B cell (primary cell): ENCODE measurements at regions of chr19 and their contacts with region 1.

Region 1: GRCh38 chr19:1020868-1021425 is at the start of gene TMEM259:
- DNase-seq: peak; percentile 99
- ATAC-seq: peak; percentile 87
- H3K4me3 ChIP-seq: peak within 1 kb of the TSS; percentile 62 to 94 (median 87)
- H3K4me3 Mint-ChIP-seq: peak within 1 kb of the TSS; percentile 89
- H3K27ac ChIP-seq: peak within 1 kb of the TSS; percentile 98 to 99
- H3K27ac Mint-ChIP-seq: peak within 1 kb of the TSS; percentile 100
- H3K4me1 ChIP-seq: peaks cover 42 to 60% of the 10 kb centered on the region in 2 donors
- H3K4me1 Mint-ChIP-seq: peaks cover 45% of the 10 kb centered on the region
- H3K27me3 ChIP-seq: no peaks in the 10 kb centered on the region
- H3K27me3 Mint-ChIP-seq: no peaks in the 10 kb centered on the region
- CTCF ChIP-seq: no peak
- total RNA-seq, gene TMEM259: 373 and 377 TPM in 2 replicates

Region 2: DNA sequence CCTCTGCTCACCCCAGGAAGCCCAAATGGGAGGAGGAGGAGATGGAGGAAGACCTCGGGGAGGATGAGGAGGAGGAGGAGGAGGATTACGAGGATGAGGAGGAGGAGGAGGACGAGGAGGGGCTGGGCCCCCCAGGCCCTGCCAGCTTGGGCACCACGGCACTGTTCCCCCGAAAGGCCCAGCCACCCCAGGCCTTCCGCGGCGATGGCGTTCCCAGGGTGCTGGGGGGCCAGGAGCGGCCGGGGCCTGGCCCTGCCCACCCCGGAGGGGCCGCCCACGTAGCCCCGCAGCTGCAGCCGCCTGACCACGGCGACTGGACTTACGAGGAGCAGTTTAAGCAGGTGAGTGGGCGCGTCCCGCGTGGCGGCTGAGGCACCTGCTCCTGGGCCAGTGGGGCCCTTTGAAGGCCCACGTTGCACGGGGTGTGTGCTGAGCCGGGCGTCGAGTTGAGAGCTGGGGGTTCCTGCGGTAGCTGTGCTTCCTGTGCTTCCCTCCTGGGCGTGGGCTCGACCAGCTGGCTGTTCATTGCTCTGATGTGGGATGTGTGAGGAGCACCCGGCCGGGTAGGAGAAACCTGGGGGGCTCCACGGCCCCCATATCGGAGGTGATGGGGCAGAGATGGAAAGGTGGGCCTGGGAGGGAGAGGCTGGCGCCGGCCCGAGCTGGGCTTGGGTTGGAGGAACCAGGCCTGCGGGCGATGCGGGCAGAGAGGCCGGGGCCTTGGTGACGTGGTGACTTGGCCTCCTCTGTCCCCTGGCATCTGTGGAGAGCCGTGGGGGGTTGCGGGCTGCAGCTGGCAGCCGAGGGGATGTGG is 88.3 kb before region 1 on chr19:
- CTCF ChIA-PET with region 1: no interaction called
- POLR2A ChIA-PET with region 1: interaction called, 11 read pairs
- intact Hi-C with region 1: no loop called
- DNase-seq: peak; percentile 66
- ATAC-seq: peak; percentile 22
- H3K4me3 ChIP-seq: peak overlapping the region in 1 of 5 experiments; percentile 28
- H3K4me3 Mint-ChIP-seq: peak overlapping the region; percentile 70
- H3K27ac ChIP-seq: peak overlapping the region in 1 of 2 donors; percentile 56
- H3K27ac Mint-ChIP-seq: peak overlapping the region; percentile 84
- H3K4me1 ChIP-seq: peaks cover 24 to 47% of the 10 kb centered on the region in 2 donors
- H3K4me1 Mint-ChIP-seq: peaks cover 32% of the 10 kb centered on the region
- H3K27me3 ChIP-seq: no peaks in the 10 kb centered on the region
- H3K27me3 Mint-ChIP-seq: no peaks in the 10 kb centered on the region
- CTCF ChIP-seq: no peak

Region 3: GRCh38 chr19:977058-977692 is 43.8 kb before region 1 on chr19:
- CTCF ChIA-PET with region 1: no interaction called
- POLR2A ChIA-PET with region 1: no interaction called
- intact Hi-C with region 1: no loop called
- DNase-seq: no peak
- ATAC-seq: no peak
- H3K4me3 ChIP-seq: no peak overlapping the region
- H3K4me3 Mint-ChIP-seq: no peak overlapping the region
- H3K27ac ChIP-seq: no peak overlapping the region
- H3K27ac Mint-ChIP-seq: no peak overlapping the region
- H3K4me1 ChIP-seq: no peaks in the 10 kb centered on the region
- H3K4me1 Mint-ChIP-seq: no peaks in the 10 kb centered on the region
- H3K27me3 ChIP-seq: no peaks in the 10 kb centered on the region
- H3K27me3 Mint-ChIP-seq: no peaks in the 10 kb centered on the region
- CTCF ChIP-seq: no peak

Region 4: DNA sequence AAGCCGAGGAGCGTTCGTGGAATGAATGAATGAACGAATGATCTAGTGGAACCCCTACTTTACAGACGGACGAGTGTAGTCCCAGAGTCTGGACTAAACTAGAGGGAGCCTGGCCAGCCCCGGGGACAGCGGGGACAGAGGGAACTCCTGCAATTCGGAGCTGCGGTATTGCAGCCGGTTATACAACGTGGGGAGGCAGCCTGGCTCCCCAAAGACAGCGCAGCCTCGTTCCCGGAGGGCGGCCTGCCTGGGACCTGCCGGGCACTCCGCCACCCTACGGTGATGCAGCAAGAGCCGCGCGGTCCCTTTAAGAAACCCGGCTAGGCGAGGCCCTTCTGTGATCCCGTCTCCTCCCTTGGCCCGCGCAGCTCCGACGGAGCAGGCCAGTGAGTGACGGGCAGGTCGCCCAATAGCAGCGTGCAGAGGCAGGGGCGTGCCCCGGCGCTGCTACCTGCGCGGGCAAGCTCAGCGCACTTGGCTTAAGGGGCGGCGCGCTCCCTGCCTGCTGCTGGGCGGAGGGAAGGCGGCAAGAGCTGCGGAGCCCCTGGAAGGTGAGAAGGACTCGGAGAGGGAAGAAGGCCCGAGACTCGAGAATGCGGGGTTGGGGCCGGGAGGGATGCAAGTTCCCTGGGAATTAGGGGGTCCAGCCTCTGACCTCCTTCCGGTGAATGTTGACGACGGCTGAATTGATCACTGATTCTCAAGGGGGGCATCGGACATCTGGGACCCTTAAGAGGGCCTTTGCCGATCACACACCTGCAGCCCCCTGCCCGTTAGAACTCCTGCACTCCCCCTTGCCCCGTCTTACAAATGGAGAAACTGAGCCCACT is 18.9 kb after region 1 on chr19 and contains the start of gene ABCA7:
- CTCF ChIA-PET with region 1: interaction called, 20 read pairs
- POLR2A ChIA-PET with region 1: interaction called, 91 read pairs
- intact Hi-C with region 1: loop called (anchors 1 kb)
- DNase-seq: peak; percentile 98
- ATAC-seq: peak; percentile 78
- H3K4me3 ChIP-seq: peak within 1 kb of the TSS; percentile 69 to 90 (median 75)
- H3K4me3 Mint-ChIP-seq: peak within 1 kb of the TSS; percentile 97
- H3K27ac ChIP-seq: peak within 1 kb of the TSS; percentile 81 to 92
- H3K27ac Mint-ChIP-seq: peak within 1 kb of the TSS; percentile 99
- H3K4me1 ChIP-seq: peaks cover 39 to 66% of the 10 kb centered on the region in 2 donors
- H3K4me1 Mint-ChIP-seq: peaks cover 51% of the 10 kb centered on the region
- H3K27me3 ChIP-seq: no peaks in the 10 kb centered on the region
- H3K27me3 Mint-ChIP-seq: no peaks in the 10 kb centered on the region
- CTCF ChIP-seq: no peak
- total RNA-seq, gene ABCA7: 192 and 206 TPM in 2 replicates

Region 5: GRCh38 chr19:1074544-1075283 is 53.8 kb after region 1 on chr19:
- CTCF ChIA-PET with region 1: interaction called, 9 read pairs
- POLR2A ChIA-PET with region 1: interaction called, 33 read pairs
- intact Hi-C with region 1: loop called (anchors 1 kb)
- DNase-seq: peak; percentile 93
- ATAC-seq: peak; percentile 53
- H3K4me3 ChIP-seq: peak overlapping the region in 1 of 5 experiments; percentile 35
- H3K4me3 Mint-ChIP-seq: peak overlapping the region; percentile 66
- H3K27ac ChIP-seq: peak overlapping the region; percentile 7 to 19
- H3K27ac Mint-ChIP-seq: peak overlapping the region; percentile 91
- H3K4me1 ChIP-seq: peaks cover 65 to 90% of the 10 kb centered on the region in 2 donors
- H3K4me1 Mint-ChIP-seq: peaks cover 48% of the 10 kb centered on the region
- H3K27me3 ChIP-seq: no peaks in the 10 kb centered on the region
- H3K27me3 Mint-ChIP-seq: no peaks in the 10 kb centered on the region
- CTCF ChIP-seq: no peak

Region 6: DNA sequence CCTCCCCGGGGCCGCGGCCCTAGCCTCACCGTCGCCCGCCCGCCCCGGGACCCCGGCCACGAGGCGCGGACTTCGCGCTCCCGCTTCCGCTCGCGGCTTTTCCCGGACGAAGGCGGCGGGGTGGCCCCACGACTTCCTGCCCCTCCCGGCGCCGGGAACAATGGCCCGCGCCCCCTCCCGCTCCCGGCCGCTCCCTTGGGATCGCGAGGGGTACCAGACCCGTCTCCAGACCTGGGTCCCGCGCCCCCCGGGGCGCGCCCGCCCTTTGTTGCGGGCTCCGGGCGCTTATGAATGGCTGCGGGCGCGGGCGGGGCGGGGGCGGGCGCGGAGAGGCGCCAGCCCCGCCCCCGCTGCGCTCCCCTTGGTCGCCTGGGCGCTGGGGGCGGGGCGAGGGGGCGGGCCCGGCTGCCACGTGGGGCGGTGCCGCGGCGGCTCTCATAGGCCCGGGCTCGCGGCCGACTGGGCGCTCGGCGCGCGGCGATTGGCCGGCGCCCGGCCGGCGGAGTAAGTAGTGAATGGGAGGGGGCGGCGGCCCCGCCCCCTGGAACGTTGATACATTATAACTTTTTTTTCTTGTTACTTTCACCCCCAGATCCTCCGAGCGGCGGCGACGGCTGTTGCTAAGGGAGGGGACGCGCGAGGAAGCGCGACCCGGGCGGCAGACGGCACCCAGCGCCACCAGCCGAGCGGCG is 228.5 kb after region 1 on chr19:
- CTCF ChIA-PET with region 1: interaction called, 4 read pairs
- POLR2A ChIA-PET with region 1: interaction called, 5 read pairs
- intact Hi-C with region 1: loop called (anchors 10 kb)
- DNase-seq: peak; percentile 98
- ATAC-seq: peak; percentile 48
- H3K4me3 ChIP-seq: peak overlapping the region in 4 of 5 experiments; percentile 72 to 92 (median 88)
- H3K4me3 Mint-ChIP-seq: peak overlapping the region; percentile 86
- H3K27ac ChIP-seq: peak overlapping the region; percentile 73 to 94
- H3K27ac Mint-ChIP-seq: peak overlapping the region; percentile 92
- H3K4me1 ChIP-seq: peaks cover 29 to 56% of the 10 kb centered on the region in 2 donors
- H3K4me1 Mint-ChIP-seq: peaks cover 27% of the 10 kb centered on the region
- H3K27me3 ChIP-seq: no peaks in the 10 kb centered on the region
- H3K27me3 Mint-ChIP-seq: no peaks in the 10 kb centered on the region
- CTCF ChIP-seq: no peak

Region 7: DNA sequence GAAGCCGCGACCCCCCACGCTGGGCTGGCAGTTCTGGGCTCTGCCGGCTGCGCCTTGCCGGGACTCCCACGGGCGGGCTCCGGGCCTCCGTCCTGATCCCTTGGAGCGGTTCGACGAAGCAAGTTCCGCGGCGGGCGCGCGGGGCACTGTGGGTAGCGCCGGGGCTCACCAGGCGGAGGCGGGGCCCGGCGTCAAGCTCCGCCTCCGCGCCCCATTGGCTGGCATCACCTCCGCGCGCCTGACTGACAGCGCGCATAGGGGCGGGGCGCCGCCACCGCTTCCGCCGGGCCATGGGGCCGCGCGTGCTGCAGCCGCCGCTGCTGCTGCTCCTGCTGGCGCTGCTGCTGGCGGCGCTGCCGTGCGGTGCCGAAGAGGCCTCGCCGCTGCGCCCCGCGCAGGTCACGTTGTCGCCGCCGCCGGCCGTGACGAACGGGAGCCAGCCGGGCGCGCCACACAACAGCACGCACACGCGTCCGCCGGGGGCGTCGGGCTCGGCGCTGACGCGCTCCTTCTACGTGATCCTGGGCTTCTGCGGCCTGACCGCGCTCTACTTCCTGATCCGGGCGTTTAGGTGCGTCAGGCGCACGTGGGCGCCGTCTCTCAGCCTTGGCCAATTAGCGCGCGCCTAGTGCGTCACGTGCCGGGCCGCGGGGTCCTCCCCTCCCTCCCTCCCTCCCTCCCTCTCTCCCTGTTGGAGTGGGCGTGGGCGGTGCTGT is 254.5 kb after region 1 on chr19 and contains the start of gene FAM174C:
- CTCF ChIA-PET with region 1: no interaction called
- POLR2A ChIA-PET with region 1: no interaction called
- intact Hi-C with region 1: no loop called
- DNase-seq: peak; percentile 99
- ATAC-seq: peak; percentile 82
- H3K4me3 ChIP-seq: peak within 1 kb of the TSS; percentile 30 to 85 (median 75)
- H3K4me3 Mint-ChIP-seq: peak within 1 kb of the TSS; percentile 89
- H3K27ac ChIP-seq: peak within 1 kb of the TSS; percentile 93 to 97
- H3K27ac Mint-ChIP-seq: peak within 1 kb of the TSS; percentile 94
- H3K4me1 ChIP-seq: peaks cover 39 to 63% of the 10 kb centered on the region in 2 donors
- H3K4me1 Mint-ChIP-seq: peaks cover 49% of the 10 kb centered on the region
- H3K27me3 ChIP-seq: no peaks in the 10 kb centered on the region
- H3K27me3 Mint-ChIP-seq: no peaks in the 10 kb centered on the region
- CTCF ChIP-seq: peak; percentile 15
- total RNA-seq, gene FAM174C: 34.5 and 41.1 TPM in 2 replicates